ENCODE measurements at regions of chr1 and their contacts with region 1.

Region 1: DNA sequence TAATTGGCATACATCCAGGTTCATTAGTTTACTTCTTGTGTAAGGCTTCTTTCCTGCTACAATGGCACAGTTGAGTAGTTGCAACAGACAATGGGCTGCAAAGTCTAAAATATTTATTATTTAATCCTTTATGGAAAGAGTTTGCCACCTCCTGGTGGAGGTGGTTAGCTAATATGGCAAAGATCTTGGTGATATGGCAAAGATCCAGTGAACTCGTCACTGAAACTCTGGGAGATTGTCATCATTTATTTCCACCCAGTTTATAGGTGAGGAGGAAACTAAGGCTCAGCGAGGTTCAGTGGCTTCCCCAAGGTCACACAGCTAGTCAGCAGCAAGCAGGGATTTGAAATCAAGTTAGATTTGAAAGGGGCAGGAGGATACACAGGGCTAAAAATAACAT is 16.1 kb upstream of the IFFO2 start:
- DNase-seq: peak; percentile 63 to 71 (median 70)
- H3K4me3 ChIP-seq: no peak overlapping the region
- H3K27ac ChIP-seq: no peak overlapping the region
- H3K4me1 ChIP-seq: peaks cover 4 to 11% (median 8%) of the 10 kb centered on the region in 4 experiments
- H3K27me3 ChIP-seq: no peaks in the 10 kb centered on the region

Region 2: DNA sequence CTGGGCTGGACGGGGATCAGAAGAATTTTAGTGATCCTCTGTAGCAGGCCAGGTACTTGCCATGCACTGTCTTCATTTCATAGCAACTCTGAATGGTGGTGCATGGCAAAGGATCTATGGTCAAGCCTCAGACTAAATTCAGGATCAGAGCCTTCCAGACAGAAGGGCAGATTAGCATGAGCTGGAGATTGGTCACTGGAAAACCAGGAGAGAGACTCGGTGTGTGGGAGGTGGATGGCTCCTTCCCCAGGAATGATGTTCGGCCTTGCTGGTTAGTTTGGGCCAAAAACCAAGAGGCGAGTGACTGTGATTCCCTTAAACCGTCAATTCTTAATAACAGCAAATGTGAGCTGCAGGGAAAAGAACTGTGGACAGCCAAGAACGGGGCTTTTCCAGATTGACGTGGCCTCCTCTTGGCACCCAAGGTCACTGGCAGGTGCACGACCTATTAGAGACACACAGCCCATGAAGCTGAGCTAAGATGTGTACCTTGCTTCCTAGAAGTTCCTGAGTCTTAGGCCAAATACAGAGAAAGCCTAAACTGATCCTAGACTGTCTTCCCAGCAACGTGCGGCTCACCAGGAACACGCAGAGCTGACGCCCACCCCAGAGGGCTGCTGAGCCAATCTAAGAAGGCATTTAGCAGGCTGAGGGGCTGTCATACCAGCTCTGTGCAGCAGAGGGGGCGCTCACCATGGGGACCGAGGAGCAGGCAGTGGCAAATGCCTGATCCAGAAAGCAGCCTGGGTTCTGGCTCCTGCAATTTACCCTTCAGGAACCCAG is 88.7 kb before region 1 on chr1:
- CTCF ChIA-PET with region 1: interaction called, 19 read pairs
- POLR2A ChIA-PET with region 1: no interaction called
- DNase-seq: peak; percentile 63 to 78 (median 65)
- H3K4me3 ChIP-seq: no peak overlapping the region
- H3K27ac ChIP-seq: no peak overlapping the region
- H3K4me1 ChIP-seq: no peaks in the 10 kb centered on the region
- H3K27me3 ChIP-seq: no peaks in the 10 kb centered on the region

Region 3: GRCh38 chr1:18962121-18962721 is 10.3 kb before region 1 on chr1:
- CTCF ChIA-PET with region 1: interaction called, 13 read pairs
- POLR2A ChIA-PET with region 1: no interaction called
- DNase-seq: no peak
- H3K4me3 ChIP-seq: no peak overlapping the region
- H3K27ac ChIP-seq: no peak overlapping the region
- H3K4me1 ChIP-seq: peaks cover 0 to 12% (median 10%) of the 10 kb centered on the region in 4 experiments
- H3K27me3 ChIP-seq: peaks cover 0 to 4% (median 2%) of the 10 kb centered on the region in 5 experiments

Measured in common myeloid progenitor, CD34-positive (primary cell).